ENCODE measurements at regions of chr7 and their contacts with region 1.

Region 1: DNA sequence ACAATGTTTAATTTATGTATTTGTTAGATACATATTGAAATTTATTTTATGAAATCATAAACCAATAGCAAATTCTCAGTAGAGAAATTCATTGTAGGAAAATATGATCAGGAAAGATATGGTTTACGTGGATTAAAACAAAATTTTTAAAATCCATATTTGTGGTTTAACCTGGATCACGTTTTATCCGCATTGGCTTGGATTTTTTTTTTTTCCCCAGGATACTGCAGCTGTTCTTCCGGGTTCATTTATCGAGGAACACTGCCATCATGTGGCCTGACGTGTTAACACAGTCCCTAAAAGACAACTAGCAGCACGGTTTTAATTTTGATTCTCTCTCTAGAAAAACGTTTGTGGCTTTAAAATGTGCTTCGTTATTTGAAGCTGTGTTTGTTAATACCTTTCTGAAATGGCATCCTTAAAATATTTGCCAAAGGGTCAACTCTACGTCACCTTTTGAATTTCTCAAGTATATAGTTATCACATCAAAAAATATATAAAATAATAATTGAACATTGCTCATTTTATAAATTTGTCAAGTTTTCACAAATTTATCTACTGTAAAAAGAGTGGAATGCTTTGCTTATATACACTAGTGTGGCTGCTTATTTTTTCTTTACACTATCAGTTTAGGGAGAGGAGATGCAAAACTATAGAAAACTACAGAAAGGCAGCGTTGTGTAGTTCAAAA is 8.7 kb upstream of the ASB4 start:
- DNase-seq: peak; percentile 73
- H3K4me3 ChIP-seq: no peak overlapping the region
- H3K27ac ChIP-seq: no peak overlapping the region
- H3K4me1 ChIP-seq: peaks cover 0 to 8% of the 10 kb centered on the region in 2 experiments; a peak in 2 of 4 replicates
- H3K27me3 ChIP-seq: no peaks in the 10 kb centered on the region
- CTCF ChIP-seq: peak; percentile 98
- EP300 ChIP-seq: no peak
- RAD21 ChIP-seq: peak; percentile 98

Region 2: DNA sequence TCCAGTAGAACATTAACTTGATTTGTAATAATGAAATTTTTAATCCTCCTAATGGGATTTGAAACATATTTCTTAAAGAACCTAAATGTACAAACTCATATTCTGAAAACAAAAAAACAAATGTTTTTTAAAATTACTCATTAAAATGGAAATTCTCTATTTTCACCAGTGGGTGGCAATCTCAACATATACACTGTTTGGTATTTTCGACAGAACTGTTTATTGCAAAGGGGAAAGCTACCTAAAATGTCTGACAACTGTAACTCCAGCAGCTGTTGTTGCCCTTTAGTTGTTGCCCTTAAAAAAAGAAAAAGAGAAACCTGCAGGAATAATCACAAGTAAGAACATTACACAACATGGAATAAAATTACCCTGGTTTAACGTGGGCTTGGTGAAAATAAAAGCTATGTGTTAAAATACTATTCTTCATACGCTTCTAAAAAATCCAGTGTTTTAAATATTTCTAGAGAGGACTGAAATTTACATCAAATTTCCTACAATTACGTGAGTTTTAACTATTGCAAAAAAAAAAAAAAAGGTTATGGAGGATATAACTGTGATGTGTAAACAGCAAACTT is 1027.8 kb before region 1 on chr7:
- CTCF ChIA-PET with region 1: interaction called, 51 read pairs
- POLR2A ChIA-PET with region 1: no interaction called
- DNase-seq: peak; percentile 49
- H3K4me3 ChIP-seq: no peak overlapping the region
- H3K27ac ChIP-seq: no peak overlapping the region
- H3K4me1 ChIP-seq: peaks cover 0 to 11% of the 10 kb centered on the region in 2 experiments; a peak in 2 of 4 replicates
- H3K27me3 ChIP-seq: no peaks in the 10 kb centered on the region
- CTCF ChIP-seq: peak; percentile 88
- EP300 ChIP-seq: no peak
- RAD21 ChIP-seq: peak; percentile 97

Region 3: DNA sequence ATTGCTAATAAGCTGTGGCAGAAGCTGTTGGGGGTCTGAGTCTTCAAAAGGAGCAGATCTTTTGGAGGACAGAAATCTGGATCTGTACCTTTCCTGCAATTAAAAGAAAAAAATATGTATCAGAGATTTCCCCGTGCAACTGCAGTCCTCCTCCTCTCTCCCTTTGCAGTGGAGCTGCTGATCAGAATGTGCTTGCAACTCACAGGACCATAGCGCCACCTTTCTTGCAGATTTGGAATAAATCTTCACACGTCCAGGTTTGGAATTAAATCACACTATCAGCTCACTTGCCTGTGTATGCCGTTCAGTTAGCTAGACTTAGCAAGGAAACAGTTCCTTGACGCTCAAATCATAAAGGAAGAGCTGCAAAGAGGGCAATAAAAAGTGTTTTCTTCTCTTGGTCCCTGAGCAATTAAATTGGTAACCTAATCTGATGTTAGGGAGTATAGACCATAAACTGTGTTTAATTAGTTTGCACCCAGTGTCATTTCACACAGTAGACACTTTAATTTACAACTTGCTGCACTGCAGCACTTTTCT is 230.1 kb before region 1 on chr7:
- CTCF ChIA-PET with region 1: interaction called, 17 read pairs
- POLR2A ChIA-PET with region 1: no interaction called
- DNase-seq: peak; percentile 55
- H3K4me3 ChIP-seq: peak overlapping the region; percentile 21 to 25; a peak in 2 of 4 replicates
- H3K27ac ChIP-seq: no peak overlapping the region
- H3K4me1 ChIP-seq: peaks cover 0 to 4% of the 10 kb centered on the region in 2 experiments; a peak in 2 of 4 replicates
- H3K27me3 ChIP-seq: no peaks in the 10 kb centered on the region
- CTCF ChIP-seq: peak; percentile 84
- EP300 ChIP-seq: no peak
- RAD21 ChIP-seq: peak; percentile 87

Region 4: GRCh38 chr7:95434557-95435421 is 42.3 kb before region 1 on chr7 and contains the start of gene PON2:
- CTCF ChIA-PET with region 1: interaction called, 14 read pairs
- POLR2A ChIA-PET with region 1: interaction called, 3 read pairs
- DNase-seq: peak; percentile 94
- H3K4me3 ChIP-seq: peak within 1 kb of the TSS; percentile 70 to 72
- H3K27ac ChIP-seq: peak within 1 kb of the TSS; percentile 64 to 83
- H3K4me1 ChIP-seq: peaks cover 0 to 6% of the 10 kb centered on the region in 2 experiments; a peak in 1 of 4 replicates
- H3K27me3 ChIP-seq: no peaks in the 10 kb centered on the region
- CTCF ChIP-seq: no peak
- EP300 ChIP-seq: no peak
- RAD21 ChIP-seq: no peak
- polyA plus RNA-seq, gene PON2: 125 and 162 TPM in 2 replicates

Region 5: DNA sequence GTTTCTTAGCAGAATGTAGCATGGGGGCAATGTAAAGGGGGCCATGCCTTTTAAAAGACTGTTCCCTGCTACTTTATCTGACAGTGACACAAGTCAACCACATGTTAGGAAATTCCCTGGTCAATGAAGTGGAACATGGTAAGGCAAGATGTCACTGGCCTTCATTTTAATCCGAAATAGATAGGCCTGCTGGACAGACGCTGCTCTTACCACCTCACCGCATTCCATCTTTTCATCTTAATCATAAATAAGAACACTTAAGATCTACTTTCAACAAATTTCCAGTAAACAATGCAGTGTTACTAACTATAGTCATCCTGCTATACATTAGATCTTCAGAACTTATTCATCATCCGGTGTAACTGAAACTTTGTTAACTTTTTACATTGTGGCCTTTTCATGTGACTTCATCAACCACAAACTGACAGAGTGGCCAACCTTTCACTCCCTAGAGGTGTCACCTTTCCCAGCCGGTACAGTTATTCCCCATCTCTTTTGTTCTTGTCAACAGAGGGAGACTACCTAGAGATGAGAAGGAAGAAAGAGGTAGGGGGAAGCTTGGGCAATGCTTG is 24.3 kb after region 1 on chr7:
- CTCF ChIA-PET with region 1: interaction called, 13 read pairs
- POLR2A ChIA-PET with region 1: no interaction called
- DNase-seq: no peak
- H3K4me3 ChIP-seq: no peak overlapping the region
- H3K27ac ChIP-seq: peak overlapping the region in 1 of 2 experiments; percentile 77; a peak in 2 of 4 replicates
- H3K4me1 ChIP-seq: peaks cover 0 to 9% of the 10 kb centered on the region in 2 experiments; a peak in 1 of 4 replicates
- H3K27me3 ChIP-seq: no peaks in the 10 kb centered on the region
- CTCF ChIP-seq: no peak
- EP300 ChIP-seq: peak in 1 of 2 experiments; percentile 65; a peak in 1 of 4 replicates
- RAD21 ChIP-seq: no peak

Region 6: DNA sequence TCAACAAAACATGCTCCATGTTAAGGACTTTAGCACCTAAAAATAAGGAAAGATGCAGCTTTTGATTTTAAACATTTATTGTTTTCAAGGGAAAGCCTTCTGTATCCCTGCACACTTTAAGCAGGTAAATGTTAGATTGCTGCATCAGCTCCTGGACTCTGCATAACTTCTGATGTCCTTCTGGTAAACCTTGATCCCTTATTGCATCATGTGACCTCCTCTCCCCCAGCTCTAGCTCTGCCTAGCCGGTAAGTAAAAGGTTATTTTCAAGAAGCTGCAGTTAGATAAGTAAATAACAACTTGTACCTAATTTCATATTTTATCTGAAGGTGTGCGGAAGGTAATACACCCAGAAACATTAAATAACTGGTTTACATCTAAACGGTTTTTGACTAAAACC is 81.8 kb after region 1 on chr7:
- CTCF ChIA-PET with region 1: no interaction called
- POLR2A ChIA-PET with region 1: no interaction called
- DNase-seq: no peak
- H3K4me3 ChIP-seq: no peak overlapping the region
- H3K27ac ChIP-seq: no peak overlapping the region
- H3K4me1 ChIP-seq: no peaks in the 10 kb centered on the region
- H3K27me3 ChIP-seq: peaks cover 34% of the 10 kb centered on the region
- CTCF ChIP-seq: no peak
- EP300 ChIP-seq: no peak
- RAD21 ChIP-seq: no peak